A673 (cell line): ENCODE measurements at regions of chr17 and their contacts with region 1.

Region 1: GRCh38 chr17:29369831-29370735 is 20.1 kb upstream of the TAOK1 start:
- DNase-seq: peak; percentile 91
- H3K4me3 ChIP-seq: peak overlapping the region; percentile 25
- H3K27ac ChIP-seq: no peak overlapping the region
- H3K4me1 ChIP-seq: peaks cover 12% of the 10 kb centered on the region
- H3K27me3 ChIP-seq: no peaks in the 10 kb centered on the region
- CTCF ChIP-seq: peak; percentile 76

Region 2: GRCh38 chr17:29444589-29444988 is 74.5 kb after region 1 on chr17:
- CTCF ChIA-PET with region 1: interaction called, 13 read pairs
- POLR2A ChIA-PET with region 1: no interaction called
- intact Hi-C with region 1: no loop called
- DNase-seq: no peak
- H3K4me3 ChIP-seq: no peak overlapping the region
- H3K27ac ChIP-seq: no peak overlapping the region
- H3K4me1 ChIP-seq: peaks cover 8% of the 10 kb centered on the region
- H3K27me3 ChIP-seq: no peaks in the 10 kb centered on the region
- CTCF ChIP-seq: no peak

Region 3: DNA sequence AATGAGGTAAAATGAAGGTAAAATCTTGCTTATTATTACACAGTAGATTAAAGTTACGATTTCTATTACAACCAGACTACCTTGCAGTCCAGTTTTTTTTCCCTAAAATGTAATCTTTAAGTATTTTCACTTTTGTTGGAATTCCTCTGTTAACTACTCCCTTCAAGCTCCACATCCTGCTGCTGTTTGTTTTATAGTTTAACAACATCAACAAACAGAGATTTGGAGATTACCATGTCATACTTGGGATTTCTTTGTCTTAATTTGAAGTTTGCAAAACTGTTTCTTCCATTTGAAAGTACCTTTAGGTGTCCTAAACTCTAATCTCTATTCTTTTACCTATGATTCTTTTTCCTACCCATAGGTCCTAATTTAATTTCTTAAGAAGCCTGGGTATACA is 113.4 kb after region 1 on chr17:
- CTCF ChIA-PET with region 1: no interaction called
- POLR2A ChIA-PET with region 1: interaction called, 15 read pairs
- intact Hi-C with region 1: no loop called
- DNase-seq: no peak
- H3K4me3 ChIP-seq: no peak overlapping the region
- H3K27ac ChIP-seq: no peak overlapping the region
- H3K4me1 ChIP-seq: no peaks in the 10 kb centered on the region
- H3K27me3 ChIP-seq: no peaks in the 10 kb centered on the region
- CTCF ChIP-seq: no peak

Region 4: GRCh38 chr17:29533976-29534375 is 163.9 kb after region 1 on chr17:
- CTCF ChIA-PET with region 1: interaction called, 23 read pairs
- POLR2A ChIA-PET with region 1: interaction called, 6 read pairs
- intact Hi-C with region 1: loop called (anchors 2 kb)
- DNase-seq: no peak
- H3K4me3 ChIP-seq: no peak overlapping the region
- H3K27ac ChIP-seq: no peak overlapping the region
- H3K4me1 ChIP-seq: no peaks in the 10 kb centered on the region
- H3K27me3 ChIP-seq: no peaks in the 10 kb centered on the region
- CTCF ChIP-seq: no peak

Region 5: GRCh38 chr17:29568331-29569244 is 198.5 kb after region 1 on chr17 and contains the start of gene TP53I13:
- CTCF ChIA-PET with region 1: interaction called, 5 read pairs
- POLR2A ChIA-PET with region 1: no interaction called
- intact Hi-C with region 1: loop called (anchors 2 kb)
- DNase-seq: peak; percentile 95
- H3K4me3 ChIP-seq: peak within 1 kb of the TSS; percentile 83
- H3K27ac ChIP-seq: peak within 1 kb of the TSS; percentile 88
- H3K4me1 ChIP-seq: peaks cover 18% of the 10 kb centered on the region
- H3K27me3 ChIP-seq: no peaks in the 10 kb centered on the region
- CTCF ChIP-seq: no peak
- total RNA-seq, gene TP53I13: 34.6 and 41.4 TPM in 2 replicates

Region 6: GRCh38 chr17:29603109-29603674 is 233.1 kb after region 1 on chr17:
- CTCF ChIA-PET with region 1: no interaction called
- POLR2A ChIA-PET with region 1: no interaction called
- intact Hi-C with region 1: no loop called
- DNase-seq: no peak
- H3K4me3 ChIP-seq: no peak overlapping the region
- H3K27ac ChIP-seq: no peak overlapping the region
- H3K4me1 ChIP-seq: peaks cover 13% of the 10 kb centered on the region
- H3K27me3 ChIP-seq: no peaks in the 10 kb centered on the region
- CTCF ChIP-seq: no peak

Region 7: DNA sequence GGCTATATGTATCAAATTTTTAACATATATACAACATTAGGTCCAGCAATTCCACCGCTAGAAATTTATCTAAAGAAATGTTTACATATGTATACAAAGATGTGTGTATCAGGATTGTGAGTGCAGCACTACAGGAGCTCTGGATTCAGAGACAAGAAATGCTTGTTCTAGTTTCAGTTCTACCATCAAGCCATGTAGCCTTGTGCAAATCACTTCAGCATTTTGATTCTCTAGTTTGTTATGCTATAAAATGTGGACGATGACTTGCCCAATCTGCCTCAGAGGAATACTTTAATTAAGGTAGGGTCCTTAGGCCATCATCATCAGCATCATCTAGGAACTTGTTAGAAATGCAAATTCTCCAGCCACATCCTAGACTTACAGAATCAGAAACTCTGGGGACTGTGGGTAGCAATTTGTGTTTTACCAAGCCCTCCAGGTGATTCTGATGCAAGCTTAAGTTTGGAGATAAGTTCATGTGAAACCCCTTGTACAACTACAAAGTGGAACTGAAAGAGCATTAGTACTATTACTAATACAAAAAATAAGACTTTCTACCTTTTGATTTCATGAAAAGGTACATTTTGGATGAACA is 383.9 kb after region 1 on chr17:
- CTCF ChIA-PET with region 1: no interaction called
- POLR2A ChIA-PET with region 1: no interaction called
- intact Hi-C with region 1: no loop called
- DNase-seq: no peak
- H3K4me3 ChIP-seq: no peak overlapping the region
- H3K27ac ChIP-seq: no peak overlapping the region
- H3K4me1 ChIP-seq: peaks cover 1% of the 10 kb centered on the region
- H3K27me3 ChIP-seq: no peaks in the 10 kb centered on the region
- CTCF ChIP-seq: no peak